ENCODE measurements at regions of chr11 and their contacts with region 1.

Region 1: GRCh38 chr11:21072558-21072957 is 403.2 kb downstream of the NELL1 start:
- DNase-seq: no peak
- ATAC-seq: no peak
- H3K4me3 ChIP-seq: no peak overlapping the region
- H3K4me3 Mint-ChIP-seq: no peak overlapping the region
- H3K27ac ChIP-seq: no peak overlapping the region
- H3K27ac Mint-ChIP-seq: no peak overlapping the region
- H3K4me1 ChIP-seq: no peaks in the 10 kb centered on the region
- H3K4me1 Mint-ChIP-seq: no peaks in the 10 kb centered on the region
- H3K27me3 ChIP-seq: no peaks in the 10 kb centered on the region
- H3K27me3 Mint-ChIP-seq: no peaks in the 10 kb centered on the region

Region 2: GRCh38 chr11:21026685-21027084 is 45.9 kb before region 1 on chr11:
- CTCF ChIA-PET with region 1: no interaction called
- POLR2A ChIA-PET with region 1: no interaction called
- intact Hi-C with region 1: loop called in 1 of 2 experiments (anchors 1 kb)
- DNase-seq: no peak
- ATAC-seq: no peak
- H3K4me3 ChIP-seq: no peak overlapping the region
- H3K4me3 Mint-ChIP-seq: no peak overlapping the region
- H3K27ac ChIP-seq: no peak overlapping the region
- H3K27ac Mint-ChIP-seq: no peak overlapping the region
- H3K4me1 ChIP-seq: no peaks in the 10 kb centered on the region
- H3K4me1 Mint-ChIP-seq: no peaks in the 10 kb centered on the region
- H3K27me3 ChIP-seq: no peaks in the 10 kb centered on the region
- H3K27me3 Mint-ChIP-seq: no peaks in the 10 kb centered on the region

Measured in naive thymus-derived CD4-positive, alpha-beta T cell (primary cell).